ENCODE measurements at regions of chr9 and their contacts with region 1.

Region 1: GRCh38 chr9:97386733-97387503 is 25.0 kb upstream of the TDRD7 start:
- DNase-seq: no peak
- H3K4me3 ChIP-seq: no peak overlapping the region
- CTCF ChIP-seq: peak; percentile 84

Region 2: DNA sequence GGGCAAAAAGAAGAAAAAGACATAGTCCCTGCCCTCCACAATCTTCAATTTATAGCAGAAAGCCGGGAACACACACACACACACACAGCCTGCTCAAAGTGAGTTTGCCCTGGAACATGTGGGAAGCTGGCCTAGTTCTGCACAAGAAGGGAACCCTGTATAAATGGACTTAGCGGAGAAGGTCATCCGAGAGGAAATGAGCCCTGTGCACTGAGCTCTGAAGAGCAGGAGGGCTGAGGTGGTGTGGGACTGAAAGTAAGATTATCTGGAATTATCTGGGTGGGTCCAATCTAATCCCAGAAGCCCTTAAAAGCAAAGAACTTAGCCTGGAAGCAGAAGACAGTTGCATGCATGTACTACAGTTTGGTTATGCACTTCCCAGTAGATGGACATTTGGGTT is 258.0 kb before region 1 on chr9:
- CTCF ChIA-PET with region 1: no interaction called
- POLR2A ChIA-PET with region 1: no interaction called
- DNase-seq: no peak
- H3K4me3 ChIP-seq: no peak overlapping the region
- CTCF ChIP-seq: no peak

Region 3: GRCh38 chr9:97367729-97368128 is 19.2 kb before region 1 on chr9:
- CTCF ChIA-PET with region 1: interaction called, 17 read pairs
- POLR2A ChIA-PET with region 1: no interaction called
- DNase-seq: no peak
- H3K4me3 ChIP-seq: no peak overlapping the region
- CTCF ChIP-seq: no peak

Region 4: DNA sequence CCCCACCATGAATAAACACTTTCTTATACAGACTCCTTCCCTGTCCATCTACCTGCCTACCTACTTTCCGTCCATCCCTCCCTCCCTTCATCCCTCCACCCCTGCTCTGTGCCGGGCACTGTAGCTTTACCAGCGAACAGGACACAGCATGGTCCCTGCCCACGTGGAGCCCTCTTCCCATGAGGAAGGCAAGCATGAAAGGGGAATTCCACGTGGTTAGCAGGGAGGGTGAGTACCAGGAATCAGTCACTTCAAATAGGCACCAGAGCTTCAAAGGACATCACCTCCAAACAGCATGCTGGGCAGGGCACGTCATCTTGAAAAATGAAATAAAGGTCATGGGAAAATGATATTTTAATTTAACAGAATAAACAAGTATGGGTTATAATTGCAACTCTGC is 10.0 kb before region 1 on chr9:
- CTCF ChIA-PET with region 1: interaction called, 13 read pairs
- POLR2A ChIA-PET with region 1: no interaction called
- DNase-seq: no peak
- H3K4me3 ChIP-seq: no peak overlapping the region
- CTCF ChIP-seq: no peak

Region 5: DNA sequence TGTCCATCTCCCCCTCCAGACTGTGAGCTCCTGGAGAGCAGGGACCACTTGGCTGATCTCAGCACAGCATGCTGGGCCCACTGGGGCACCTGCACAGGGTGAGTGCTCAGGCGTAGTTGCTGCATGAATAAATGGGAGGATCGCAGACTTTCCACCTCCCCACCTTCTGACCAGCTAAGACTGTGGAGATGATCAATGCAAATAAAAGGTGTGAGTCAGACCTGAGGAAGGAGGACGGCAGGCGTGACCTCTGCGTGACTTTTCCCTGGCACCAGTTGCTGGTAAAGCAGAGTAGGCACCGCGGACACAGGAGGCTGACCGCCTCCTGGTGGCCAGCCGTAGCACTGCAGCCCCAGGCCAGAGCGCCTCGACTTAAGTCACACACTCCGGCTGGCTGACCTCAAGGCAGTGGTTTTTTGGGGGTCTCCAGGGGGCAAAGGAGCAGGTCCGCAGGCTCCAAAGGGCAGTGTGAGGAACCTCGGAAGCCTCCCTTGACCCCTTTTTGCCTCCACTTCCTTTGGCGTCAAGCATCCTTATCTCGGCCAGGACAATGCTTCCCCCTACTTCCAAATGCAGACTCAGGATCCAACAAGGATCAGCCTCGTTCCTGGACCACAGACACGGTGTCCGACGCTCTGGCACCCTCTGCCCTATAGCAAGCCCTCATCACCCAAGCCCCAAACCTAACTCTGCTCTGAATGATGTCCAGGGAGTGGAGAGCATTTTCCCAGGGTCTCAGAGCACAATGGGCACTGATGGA is 12.3 kb after region 1 on chr9:
- CTCF ChIA-PET with region 1: interaction called, 20 read pairs
- POLR2A ChIA-PET with region 1: no interaction called
- DNase-seq: peak; percentile 16
- H3K4me3 ChIP-seq: no peak overlapping the region
- CTCF ChIP-seq: peak; percentile 97

Measured in AG04449 (cell line).